ENCODE measurements at regions of chr11 and their contacts with region 1.

Region 1: GRCh38 chr11:120682866-120683265 is 171.3 kb downstream of the GRIK4 start:
- DNase-seq: no peak
- ATAC-seq: no peak
- H3K4me3 ChIP-seq: no peak overlapping the region
- H3K4me3 Mint-ChIP-seq: no peak overlapping the region
- H3K27ac ChIP-seq: no peak overlapping the region
- H3K27ac Mint-ChIP-seq: no peak overlapping the region
- H3K4me1 ChIP-seq: no peaks in the 10 kb centered on the region
- H3K4me1 Mint-ChIP-seq: no peaks in the 10 kb centered on the region
- H3K27me3 ChIP-seq: peaks cover 0 to 18% of the 10 kb centered on the region in 2 experiments
- H3K27me3 Mint-ChIP-seq: peaks cover 19 to 33% of the 10 kb centered on the region in 2 donors

Region 2: DNA sequence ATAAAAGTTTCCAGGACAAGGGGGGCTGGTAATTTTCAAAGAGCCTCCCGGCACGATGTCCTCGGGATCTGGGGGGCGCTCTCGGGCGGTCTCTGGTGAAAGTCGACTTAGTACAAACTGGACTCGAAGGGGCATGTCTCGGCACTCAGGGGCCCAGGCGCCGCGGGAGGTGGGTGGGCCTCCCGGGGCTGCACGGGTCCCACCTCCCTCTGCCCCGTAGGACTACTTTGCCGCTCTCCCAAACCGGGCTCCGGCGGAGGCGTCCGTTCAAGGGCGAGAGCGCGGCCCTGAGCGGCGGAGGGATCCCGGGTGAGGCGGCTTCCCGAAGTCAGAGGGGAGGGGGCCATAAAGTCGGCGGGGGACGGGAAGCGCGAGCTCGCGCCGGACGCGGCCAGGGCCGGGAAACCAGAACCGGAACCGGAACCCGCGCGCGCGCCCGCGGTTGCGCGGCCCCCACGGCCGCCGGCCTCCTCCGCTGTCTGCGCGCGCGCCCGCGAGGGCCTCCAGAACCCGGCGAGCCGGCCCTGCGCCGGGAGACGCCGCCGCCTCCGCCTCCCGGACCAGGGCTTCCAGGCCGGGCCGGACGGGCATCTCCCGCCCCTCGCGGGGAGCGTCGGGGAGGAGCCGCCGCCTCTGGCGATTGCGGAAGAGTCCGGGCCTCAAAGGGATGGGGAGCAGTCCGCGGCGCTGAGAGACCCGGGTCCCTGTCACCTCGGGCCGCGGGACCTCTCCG is 346.8 kb before region 1 on chr11 and contains the start of gene ARHGEF12:
- CTCF ChIA-PET with region 1: interaction called, 5 to 15 read pairs
- POLR2A ChIA-PET with region 1: no interaction called
- DNase-seq: peak; percentile 15 to 82 (median 50)
- ATAC-seq: peak; percentile 55 to 74 (median 68)
- H3K4me3 ChIP-seq: peak within 1 kb of the TSS; percentile 73 to 81
- H3K4me3 Mint-ChIP-seq: peak within 1 kb of the TSS; percentile 84 to 92 (median 85)
- H3K27ac ChIP-seq: no peak within 1 kb of the TSS
- H3K27ac Mint-ChIP-seq: peak within 1 kb of the TSS; percentile 55 to 74
- H3K4me1 ChIP-seq: peaks cover 12 to 20% of the 10 kb centered on the region in 2 experiments
- H3K4me1 Mint-ChIP-seq: peaks cover 33 to 41% (median 38%) of the 10 kb centered on the region in 3 donors
- H3K27me3 ChIP-seq: peaks cover 11 to 14% of the 10 kb centered on the region in 2 experiments
- H3K27me3 Mint-ChIP-seq: peaks cover 41 to 53% of the 10 kb centered on the region in 2 donors
- total RNA-seq, gene ARHGEF12: 4.8 to 12.8 (median 8.0) TPM